ENCODE measurements at regions of chr18 and their contacts with region 1.

Region 1: GRCh38 chr18:37249895-37250618 is 315.5 kb downstream of the CELF4 start:
- DNase-seq: no peak
- H3K4me3 ChIP-seq: no peak overlapping the region
- H3K27ac ChIP-seq: no peak overlapping the region
- H3K4me1 ChIP-seq: no peaks in the 10 kb centered on the region
- H3K27me3 ChIP-seq: peaks cover 6% of the 10 kb centered on the region; the same call in 1 of the 2 replicates
- CTCF ChIP-seq: no peak

Region 2: GRCh38 chr18:36901277-36901701 is 348.8 kb before region 1 on chr18:
- CTCF ChIA-PET with region 1: no interaction called
- POLR2A ChIA-PET with region 1: no interaction called
- intact Hi-C with region 1: no loop called
- DNase-seq: no peak
- H3K4me3 ChIP-seq: no peak overlapping the region
- H3K27ac ChIP-seq: no peak overlapping the region
- H3K4me1 ChIP-seq: 0 out of 2 replicates have a peak, but pooled peaks cover 4% of the 10 kb centered on the region
- H3K27me3 ChIP-seq: no peaks in the 10 kb centered on the region
- CTCF ChIP-seq: no peak

Region 3: GRCh38 chr18:36947821-36948348 is 302.2 kb before region 1 on chr18:
- CTCF ChIA-PET with region 1: no interaction called
- POLR2A ChIA-PET with region 1: no interaction called
- intact Hi-C with region 1: no loop called
- DNase-seq: peak; percentile 39 to 84
- H3K4me3 ChIP-seq: no peak overlapping the region
- H3K27ac ChIP-seq: peak overlapping the region; percentile 63
- H3K4me1 ChIP-seq: peaks cover 17% of the 10 kb centered on the region
- H3K27me3 ChIP-seq: no peaks in the 10 kb centered on the region
- CTCF ChIP-seq: no peak

Region 4: GRCh38 chr18:37294951-37295350 is 44.9 kb after region 1 on chr18:
- CTCF ChIA-PET with region 1: no interaction called
- POLR2A ChIA-PET with region 1: no interaction called
- intact Hi-C with region 1: no loop called
- DNase-seq: no peak
- H3K4me3 ChIP-seq: no peak overlapping the region
- H3K27ac ChIP-seq: no peak overlapping the region
- H3K4me1 ChIP-seq: peaks cover 8% of the 10 kb centered on the region; the same call in 1 of the 2 replicates
- H3K27me3 ChIP-seq: no peaks in the 10 kb centered on the region
- CTCF ChIP-seq: peak; percentile 29; the same call in 1 of the 2 replicates

Region 5: GRCh38 chr18:37321589-37322491 is 71.8 kb after region 1 on chr18:
- CTCF ChIA-PET with region 1: interaction called, 10 read pairs
- POLR2A ChIA-PET with region 1: no interaction called
- intact Hi-C with region 1: no loop called
- DNase-seq: no peak
- H3K4me3 ChIP-seq: no peak overlapping the region
- H3K27ac ChIP-seq: no peak overlapping the region
- H3K4me1 ChIP-seq: no peaks in the 10 kb centered on the region
- H3K27me3 ChIP-seq: no peaks in the 10 kb centered on the region
- CTCF ChIP-seq: no peak

Measured in PC-9 (cell line).